Colonic mucosa (tissue), 4 donors: ENCODE measurements at regions of chr10 and their contacts with region 1.

Region 1: DNA sequence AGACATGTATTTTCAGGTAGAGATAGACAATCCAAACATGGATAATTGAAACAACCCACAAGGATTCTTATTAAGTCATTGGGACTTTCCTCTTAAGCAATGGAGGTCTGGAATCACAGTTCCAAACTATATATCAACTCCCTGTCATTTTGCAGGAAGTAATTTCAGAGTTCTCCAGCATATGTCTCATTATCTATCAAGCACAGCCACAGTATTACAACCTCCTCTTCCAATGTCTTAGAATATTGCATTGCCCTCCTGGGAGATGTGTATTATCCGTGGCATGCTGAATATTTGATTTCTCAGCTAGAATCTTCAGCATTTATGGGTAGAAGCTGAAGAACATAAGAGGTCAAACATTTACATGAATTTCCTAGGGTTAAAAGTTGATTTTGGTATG is 1255.8 kb downstream of the SORCS1 start:
- DNase-seq: no peak
- H3K4me3 ChIP-seq: no peak overlapping the region
- H3K27ac ChIP-seq: no peak overlapping the region
- H3K4me1 ChIP-seq: no peaks in the 10 kb centered on the region
- H3K27me3 ChIP-seq: no peaks in the 10 kb centered on the region
- CTCF ChIP-seq: no peak

Region 2: DNA sequence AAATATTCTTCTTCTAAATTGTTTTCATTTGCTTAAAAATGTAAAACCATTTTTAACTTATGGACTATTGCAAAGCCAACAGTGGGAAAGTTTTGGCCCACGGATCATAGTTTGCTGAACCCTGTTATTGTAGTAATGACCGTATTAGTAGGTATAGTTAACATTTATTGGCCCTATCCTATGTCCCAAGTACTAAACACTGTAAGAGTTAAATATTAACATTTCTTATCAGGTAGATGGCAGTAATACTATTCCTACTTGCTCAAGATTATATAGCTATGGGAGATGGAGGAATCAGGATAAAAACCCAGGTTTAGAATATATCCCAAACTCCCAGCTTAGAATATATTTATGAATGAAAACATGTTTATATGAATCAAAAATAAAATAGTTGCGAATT is 274.4 kb before region 1 on chr10:
- intact Hi-C with region 1: loop called (anchors 5 kb)
- DNase-seq: no peak
- H3K4me3 ChIP-seq: no peak overlapping the region
- H3K27ac ChIP-seq: no peak overlapping the region
- H3K4me1 ChIP-seq: no peaks in the 10 kb centered on the region
- H3K27me3 ChIP-seq: no peaks in the 10 kb centered on the region
- CTCF ChIP-seq: no peak

Region 3: GRCh38 chr10:105793071-105793470 is 115.6 kb before region 1 on chr10:
- intact Hi-C with region 1: no loop called
- DNase-seq: no peak
- H3K4me3 ChIP-seq: no peak overlapping the region
- H3K27ac ChIP-seq: no peak overlapping the region
- H3K4me1 ChIP-seq: no peaks in the 10 kb centered on the region
- H3K27me3 ChIP-seq: no peaks in the 10 kb centered on the region
- CTCF ChIP-seq: no peak